ENCODE measurements at regions of chr5 and their contacts with region 1.

Region 1: DNA sequence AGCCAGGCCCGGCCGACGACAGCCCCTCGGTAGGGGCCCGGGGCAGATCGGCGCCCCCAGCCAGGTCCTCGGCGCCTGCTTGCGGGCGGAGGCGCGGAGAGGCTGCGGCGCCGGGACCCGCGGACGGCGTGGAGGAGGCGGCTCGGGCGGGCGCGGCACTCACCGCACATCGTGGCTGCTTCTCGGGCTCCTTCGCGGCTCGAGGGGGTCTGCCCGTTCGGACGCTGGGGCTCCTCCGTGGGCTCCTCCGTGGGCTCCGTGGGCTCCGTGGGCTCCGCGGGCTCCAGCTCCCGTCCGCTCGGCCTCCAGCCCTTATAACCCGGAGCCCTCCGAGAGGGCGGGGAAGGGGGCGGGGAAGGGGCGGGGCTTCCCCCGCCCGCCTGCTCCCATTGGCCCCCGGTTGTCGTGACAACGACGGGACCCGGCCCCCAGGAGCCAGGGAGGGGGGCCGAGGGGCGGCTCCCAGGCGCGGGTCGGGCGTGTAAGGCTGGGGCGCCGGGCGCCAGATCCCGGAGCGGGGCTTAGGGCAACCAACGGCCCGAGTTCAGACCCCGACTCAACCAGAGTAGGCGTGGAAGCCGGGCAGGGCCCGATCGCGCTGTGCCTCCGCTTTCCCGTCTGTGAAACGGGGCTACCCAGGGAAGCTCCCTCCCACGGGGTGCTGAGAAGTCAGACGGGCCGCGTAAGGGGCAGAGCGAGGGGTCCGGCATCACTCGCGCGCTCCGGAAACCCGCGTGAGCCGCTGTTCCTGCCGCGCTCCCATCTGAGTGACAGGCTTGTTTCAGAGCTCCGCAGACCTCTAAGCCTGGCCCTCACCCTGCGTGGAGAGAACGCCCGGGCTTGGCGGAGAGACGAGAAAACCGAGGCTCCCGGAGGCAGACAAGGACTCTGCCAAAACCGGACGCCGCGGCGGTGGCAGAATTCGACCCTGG is at the start of gene GFPT2:
- DNase-seq: peak; percentile 65
- ATAC-seq: peak; percentile 91
- H3K4me3 Mint-ChIP-seq: peak within 1 kb of the TSS; percentile 78
- H3K27ac Mint-ChIP-seq: no peak within 1 kb of the TSS
- H3K4me1 Mint-ChIP-seq: peaks cover 13% of the 10 kb centered on the region
- H3K27me3 Mint-ChIP-seq: peaks cover 50% of the 10 kb centered on the region
- CTCF ChIP-seq: no peak
- total RNA-seq, gene GFPT2: 0.39 and 0.62 TPM in 2 replicates

Region 2: DNA sequence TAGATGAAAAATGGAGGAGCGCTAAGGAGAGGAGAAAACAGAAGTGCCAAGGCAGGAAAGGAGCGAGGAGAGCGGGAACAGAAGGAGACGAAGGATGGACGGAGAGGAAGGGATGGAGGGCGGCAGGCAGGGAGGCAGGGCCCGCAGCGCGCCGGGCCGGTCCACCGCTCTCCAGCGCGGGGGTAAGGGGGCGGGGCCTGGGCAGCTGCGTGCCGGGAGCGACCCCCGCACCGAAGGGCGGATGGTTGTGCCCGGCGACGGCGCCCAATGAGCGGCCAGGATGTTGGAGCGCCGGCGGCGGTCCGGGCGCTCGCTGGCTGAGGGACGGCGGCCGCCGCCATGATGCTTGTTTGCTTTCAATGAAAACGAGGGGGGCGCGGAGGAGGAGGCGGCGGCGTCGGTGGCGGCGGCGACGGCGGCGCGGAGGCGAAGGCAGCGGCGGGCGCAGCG is 140.8 kb after region 1 on chr5 and contains the start of gene CNOT6:
- CTCF ChIA-PET with region 1: no interaction called
- POLR2A ChIA-PET with region 1: no interaction called
- intact Hi-C with region 1: loop called (anchors 10 kb)
- DNase-seq: peak; percentile 95
- ATAC-seq: peak; percentile 92
- H3K4me3 Mint-ChIP-seq: peak within 1 kb of the TSS; percentile 88
- H3K27ac Mint-ChIP-seq: peak within 1 kb of the TSS; percentile 92
- H3K4me1 Mint-ChIP-seq: peaks cover 32% of the 10 kb centered on the region
- H3K27me3 Mint-ChIP-seq: no peaks in the 10 kb centered on the region
- CTCF ChIP-seq: no peak
- total RNA-seq, gene CNOT6: 24.9 and 25.7 TPM in 2 replicates

Measured in activated B cell treated with CpG ODN at 0.5 μM for 24 hours (primary cell).